ENCODE measurements at regions of chr15 and their contacts with region 1.

Region 1: DNA sequence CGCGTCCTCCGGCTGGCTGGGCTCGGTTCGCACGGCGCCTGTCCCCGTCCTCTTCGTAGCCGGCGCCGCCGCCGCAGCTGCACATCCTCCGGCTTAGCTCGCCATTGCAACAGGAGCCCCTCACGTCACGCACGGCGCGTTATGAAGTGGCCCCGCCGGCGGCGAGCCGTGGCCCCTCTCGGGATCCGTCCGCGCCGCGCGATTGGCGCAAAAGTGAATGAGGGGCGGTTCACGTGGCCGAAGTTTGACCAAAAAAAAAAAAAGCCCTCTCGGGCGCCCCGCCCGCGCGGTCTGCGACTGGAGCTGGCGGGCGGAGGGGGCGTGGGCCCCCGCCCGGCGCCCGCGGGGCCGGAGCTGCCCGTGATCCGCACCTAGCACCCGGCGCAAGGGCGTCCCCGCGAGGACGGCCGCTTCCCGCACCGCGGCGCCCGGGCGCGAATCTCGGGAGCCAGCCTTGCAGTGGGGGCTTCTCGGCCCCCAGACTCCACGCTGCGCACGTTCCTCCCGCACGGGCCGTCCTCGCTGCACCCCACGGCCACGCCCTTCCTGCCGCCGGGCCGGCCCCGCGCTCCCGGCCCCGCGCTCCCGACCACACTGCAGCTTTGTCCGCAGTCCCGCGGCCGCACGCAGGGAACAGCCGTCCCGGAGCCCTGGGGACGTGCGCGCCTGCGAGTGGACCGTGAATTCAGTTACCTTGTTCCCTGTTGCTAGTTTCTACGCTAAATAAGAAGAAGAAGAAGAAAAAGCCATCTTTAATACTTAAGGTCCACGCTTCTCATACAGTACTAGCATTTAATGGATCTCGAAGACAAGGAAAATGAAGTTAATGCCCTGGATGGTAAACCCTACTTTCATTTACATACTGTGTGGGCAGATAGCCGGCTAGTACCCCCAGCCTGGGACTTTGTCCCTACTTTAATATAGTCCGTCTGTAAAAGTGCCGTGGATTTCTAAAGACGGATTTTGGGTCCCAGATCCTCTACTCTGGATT is at the start of gene CHSY1:
- DNase-seq: peak; percentile 93 to 95 (median 94)
- H3K4me3 ChIP-seq: peak within 1 kb of the TSS; percentile 87 to 96 (median 92)
- H3K4me3 Mint-ChIP-seq: peak within 1 kb of the TSS; percentile 95 to 96
- H3K27ac ChIP-seq: peak within 1 kb of the TSS; percentile 48 to 83
- H3K27ac Mint-ChIP-seq: peak within 1 kb of the TSS; percentile 84 to 92 (median 92)
- H3K4me1 ChIP-seq: peaks cover 46 to 48% of the 10 kb centered on the region in 2 donors
- H3K4me1 Mint-ChIP-seq: peaks cover 48% of the 10 kb centered on the region
- H3K27me3 ChIP-seq: no peaks in the 10 kb centered on the region
- H3K27me3 Mint-ChIP-seq: peaks cover 2 to 11% (median 7%) of the 10 kb centered on the region in 3 donors
- CTCF ChIP-seq: no peak
- polyA plus RNA-seq, gene CHSY1: 2.7 to 19.0 (median 3.0) TPM

Region 2: DNA sequence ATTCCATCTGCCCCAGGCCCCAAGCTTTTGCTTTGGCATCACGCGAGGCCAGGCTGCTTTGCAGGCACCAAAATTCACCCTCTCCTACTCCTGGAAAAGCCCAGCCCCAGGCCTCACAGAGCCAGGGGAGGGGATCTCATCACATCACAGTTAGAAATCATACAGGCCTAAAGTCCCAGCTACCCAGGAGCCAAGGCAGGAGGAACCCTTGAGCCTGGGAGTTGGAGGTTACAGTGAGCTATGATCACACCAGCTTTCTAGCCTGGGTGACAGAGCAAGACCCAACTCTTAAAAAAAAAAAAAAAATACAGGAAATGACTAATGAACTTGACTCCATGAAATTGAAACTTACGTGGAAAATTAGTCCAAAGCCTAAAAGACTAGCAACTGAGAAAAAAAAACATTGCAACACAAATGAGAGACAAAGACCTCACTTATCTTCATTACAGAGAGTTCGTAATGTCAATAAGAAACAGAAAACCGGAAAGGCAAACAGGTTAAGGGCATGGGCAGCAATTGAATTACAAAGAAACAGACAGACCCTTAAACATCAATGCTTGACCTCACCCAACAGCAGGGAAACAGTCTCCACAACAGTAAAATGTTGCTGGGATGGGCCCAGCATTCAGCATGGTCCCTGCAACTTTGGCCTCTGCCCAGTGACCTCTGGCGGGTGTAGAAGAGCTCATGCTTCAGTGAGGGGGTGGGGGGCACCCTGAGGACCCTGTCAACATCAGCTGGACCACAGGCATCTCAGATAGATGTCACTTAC is 181.4 kb before region 1 on chr15:
- intact Hi-C with region 1: no loop called
- DNase-seq: peak; percentile 23 to 48 (median 44)
- H3K4me3 ChIP-seq: no peak overlapping the region
- H3K4me3 Mint-ChIP-seq: peak overlapping the region; percentile 3 to 46
- H3K27ac ChIP-seq: peak overlapping the region; percentile 11 to 70
- H3K27ac Mint-ChIP-seq: peak overlapping the region; percentile 63 to 90 (median 81)
- H3K4me1 ChIP-seq: peaks cover 13 to 14% of the 10 kb centered on the region in 2 donors
- H3K4me1 Mint-ChIP-seq: peaks cover 10% of the 10 kb centered on the region
- H3K27me3 ChIP-seq: no peaks in the 10 kb centered on the region
- H3K27me3 Mint-ChIP-seq: peaks cover 0 to 6% (median 3%) of the 10 kb centered on the region in 3 donors
- CTCF ChIP-seq: no peak

Region 3: GRCh38 chr15:101217483-101217882 is 34.6 kb before region 1 on chr15:
- intact Hi-C with region 1: loop called in 1 of 2 experiments (anchors 5 kb)
- DNase-seq: no peak
- H3K4me3 ChIP-seq: no peak overlapping the region
- H3K4me3 Mint-ChIP-seq: no peak overlapping the region
- H3K27ac ChIP-seq: peak overlapping the region in 1 of 2 donors; percentile 14
- H3K27ac Mint-ChIP-seq: peak overlapping the region in 3 of 7 donors; percentile 9 to 21 (median 20)
- H3K4me1 ChIP-seq: peaks cover 12 to 18% of the 10 kb centered on the region in 2 donors
- H3K4me1 Mint-ChIP-seq: peaks cover 49% of the 10 kb centered on the region
- H3K27me3 ChIP-seq: no peaks in the 10 kb centered on the region
- H3K27me3 Mint-ChIP-seq: peaks cover 0 to 4% (median 1%) of the 10 kb centered on the region in 3 donors
- CTCF ChIP-seq: no peak